Activated T-helper 1 cell treated with anti-CD3 and anti-CD28 coated beads, Interleukin-12 subunit alpha, Interleukin-12 subunit beta, Interleukin-2, Interleukin-4 antibody, amounts not matched to agents 30 ng/mL and 10 ng/mL and 1 ng/mL, durations not matched to agents 14 hours and 24 hours and 36 hours (primary cell): ENCODE measurements at regions of chr2 and their contacts with region 1.

Region 1: GRCh38 chr2:181891966-181892798 is 652 bp downstream of the ITPRID2 start:
- DNase-seq: peak; percentile 57
- H3K4me3 Mint-ChIP-seq: peak overlapping the region; percentile 93
- H3K27ac Mint-ChIP-seq: peak overlapping the region; percentile 87
- H3K4me1 Mint-ChIP-seq: peaks cover 42% of the 10 kb centered on the region
- H3K27me3 Mint-ChIP-seq: peaks cover 19% of the 10 kb centered on the region

Region 2: GRCh38 chr2:181058378-181059269 is 833.6 kb before region 1 on chr2:
- intact Hi-C with region 1: loop called (anchors 5 kb)
- DNase-seq: no peak
- H3K4me3 Mint-ChIP-seq: no peak overlapping the region
- H3K27ac Mint-ChIP-seq: no peak overlapping the region
- H3K4me1 Mint-ChIP-seq: peaks cover 13% of the 10 kb centered on the region
- H3K27me3 Mint-ChIP-seq: no peaks in the 10 kb centered on the region

Region 3: DNA sequence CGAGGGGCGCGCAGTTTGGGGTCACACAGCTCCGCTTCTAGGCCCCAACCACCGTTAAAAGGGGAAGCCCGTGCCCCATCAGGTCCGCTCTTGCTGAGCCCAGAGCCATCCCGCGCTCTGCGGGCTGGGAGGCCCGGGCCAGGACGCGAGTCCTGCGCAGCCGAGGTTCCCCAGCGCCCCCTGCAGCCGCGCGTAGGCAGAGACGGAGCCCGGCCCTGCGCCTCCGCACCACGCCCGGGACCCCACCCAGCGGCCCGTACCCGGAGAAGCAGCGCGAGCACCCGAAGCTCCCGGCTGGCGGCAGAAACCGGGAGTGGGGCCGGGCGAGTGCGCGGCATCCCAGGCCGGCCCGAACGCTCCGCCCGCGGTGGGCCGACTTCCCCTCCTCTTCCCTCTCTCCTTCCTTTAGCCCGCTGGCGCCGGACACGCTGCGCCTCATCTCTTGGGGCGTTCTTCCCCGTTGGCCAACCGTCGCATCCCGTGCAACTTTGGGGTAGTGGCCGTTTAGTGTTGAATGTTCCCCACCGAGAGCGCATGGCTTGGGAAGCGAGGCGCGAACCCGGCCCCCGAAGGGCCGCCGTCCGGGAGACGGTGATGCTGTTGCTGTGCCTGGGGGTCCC is 435.0 kb before region 1 on chr2 and contains the start of gene ITGA4:
- intact Hi-C with region 1: loop called (anchors 5 kb)
- DNase-seq: peak; percentile 85
- H3K4me3 Mint-ChIP-seq: peak within 1 kb of the TSS; percentile 98
- H3K27ac Mint-ChIP-seq: peak within 1 kb of the TSS; percentile 96
- H3K4me1 Mint-ChIP-seq: peaks cover 75% of the 10 kb centered on the region
- H3K27me3 Mint-ChIP-seq: no peaks in the 10 kb centered on the region
- total RNA-seq, gene ITGA4: 98.5 and 118 TPM in 2 replicates

Region 4: GRCh38 chr2:181904022-181904632 is 11.9 kb after region 1 on chr2:
- intact Hi-C with region 1: loop called (anchors 1 kb)
- DNase-seq: no peak
- H3K4me3 Mint-ChIP-seq: no peak overlapping the region
- H3K27ac Mint-ChIP-seq: no peak overlapping the region
- H3K4me1 Mint-ChIP-seq: peaks cover 21% of the 10 kb centered on the region
- H3K27me3 Mint-ChIP-seq: no peaks in the 10 kb centered on the region

Region 5: GRCh38 chr2:181992776-181993175 is 100.6 kb after region 1 on chr2:
- intact Hi-C with region 1: no loop called
- DNase-seq: no peak
- H3K4me3 Mint-ChIP-seq: no peak overlapping the region
- H3K27ac Mint-ChIP-seq: no peak overlapping the region
- H3K4me1 Mint-ChIP-seq: no peaks in the 10 kb centered on the region
- H3K27me3 Mint-ChIP-seq: peaks cover 4% of the 10 kb centered on the region

Region 6: GRCh38 chr2:182715896-182716668 is 823.9 kb after region 1 on chr2 and contains the start of gene DNAJC10:
- intact Hi-C with region 1: loop called (anchors 1 kb)
- DNase-seq: peak; percentile 87
- H3K4me3 Mint-ChIP-seq: no peak within 1 kb of the TSS
- H3K27ac Mint-ChIP-seq: no peak within 1 kb of the TSS
- H3K4me1 Mint-ChIP-seq: no peaks in the 10 kb centered on the region
- H3K27me3 Mint-ChIP-seq: peaks cover 5% of the 10 kb centered on the region
- total RNA-seq, gene DNAJC10: 68.7 and 69.5 TPM in 2 replicates

Region 7: DNA sequence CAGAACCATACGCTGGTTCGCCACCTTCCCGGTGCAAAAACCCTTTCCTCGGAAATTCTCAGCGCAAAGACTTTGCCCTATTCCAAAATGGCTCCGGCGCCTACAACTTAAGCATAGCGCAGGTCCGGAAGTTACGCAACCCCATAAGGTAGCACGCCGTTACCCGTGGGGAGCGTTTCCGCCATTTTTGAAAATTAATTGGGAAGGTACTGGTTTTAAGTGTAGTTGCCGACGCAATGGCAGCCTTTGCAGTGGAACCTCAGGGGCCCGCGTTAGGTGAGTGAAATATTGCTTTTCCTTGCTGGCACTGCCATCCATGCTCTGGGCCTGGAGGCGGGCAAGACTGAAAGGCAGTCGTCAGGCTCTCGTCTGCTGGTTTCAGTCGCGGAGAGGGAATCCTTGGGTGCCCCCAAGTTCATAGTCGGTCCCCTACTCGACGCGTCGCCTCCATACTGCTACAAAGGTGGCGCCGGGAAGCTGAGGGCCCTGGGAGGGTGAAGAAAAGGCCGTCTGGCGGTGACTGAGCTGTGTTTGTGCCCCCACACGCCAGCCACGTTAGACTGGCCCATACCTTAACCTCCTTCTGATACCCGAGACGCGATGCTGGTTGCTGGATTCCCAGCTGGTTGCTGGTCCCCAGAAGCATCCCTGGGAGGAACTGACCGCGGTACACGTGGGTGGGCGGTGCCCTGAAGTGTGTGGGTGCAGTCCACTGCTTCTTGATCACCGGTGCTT is 1232.2 kb after region 1 on chr2 and contains the start of gene NUP35:
- intact Hi-C with region 1: loop called (anchors 5 kb)
- DNase-seq: peak; percentile 78
- H3K4me3 Mint-ChIP-seq: peak within 1 kb of the TSS; percentile 96
- H3K27ac Mint-ChIP-seq: peak within 1 kb of the TSS; percentile 98
- H3K4me1 Mint-ChIP-seq: peaks cover 29% of the 10 kb centered on the region
- H3K27me3 Mint-ChIP-seq: peaks cover 8% of the 10 kb centered on the region
- total RNA-seq, gene NUP35: 40.6 and 41.9 TPM in 2 replicates